OCI-LY7 (cell line): ENCODE measurements at regions of chr13 and their contacts with region 1.

Region 1: GRCh38 chr13:52061587-52061986 is 37.1 kb downstream of the UTP14C start:
- DNase-seq: no peak
- H3K4me3 ChIP-seq: no peak overlapping the region
- H3K27ac ChIP-seq: no peak overlapping the region
- H3K4me1 ChIP-seq: no peaks in the 10 kb centered on the region
- CTCF ChIP-seq: no peak

Region 2: DNA sequence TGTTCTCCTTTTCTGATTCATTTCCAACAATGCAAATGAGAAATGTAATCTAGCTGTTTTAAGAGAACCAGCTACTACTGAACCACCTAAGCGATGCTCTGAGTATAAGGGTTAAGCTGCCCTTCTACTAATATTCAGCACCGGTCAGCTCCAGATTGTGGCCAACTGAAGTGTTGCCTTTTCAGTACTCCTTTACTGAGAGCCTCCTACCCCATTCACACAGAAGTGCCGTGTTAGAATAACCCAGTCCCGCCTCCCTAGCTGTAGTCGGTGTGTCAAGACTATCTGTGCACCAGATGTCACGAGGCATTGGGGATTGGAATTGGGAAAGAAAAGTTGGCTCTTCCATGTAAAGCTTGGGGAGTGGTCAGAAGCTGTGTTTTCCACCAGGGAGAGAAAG is 794.0 kb before region 1 on chr13:
- CTCF ChIA-PET with region 1: interaction called, 18 read pairs
- POLR2A ChIA-PET with region 1: no interaction called
- intact Hi-C with region 1: no loop called
- DNase-seq: no peak
- H3K4me3 ChIP-seq: no peak overlapping the region
- H3K27ac ChIP-seq: no peak overlapping the region
- H3K4me1 ChIP-seq: no peaks in the 10 kb centered on the region
- CTCF ChIP-seq: no peak